ENCODE measurements at regions of chr12 and their contacts with region 1.

Region 1: GRCh38 chr12:114355389-114356088 is 50.4 kb downstream of the TBX5 start:
- DNase-seq: peak in 4 of 5 donors; percentile 33 to 69 (median 52)
- ATAC-seq: peak; percentile 58 to 88 (median 84)
- H3K4me3 ChIP-seq: no peak overlapping the region
- H3K27ac ChIP-seq: peak overlapping the region in 4 of 12 donors; percentile 11 to 38 (median 28)
- H3K4me1 ChIP-seq: peaks cover 0 to 13% (median 0%) of the 10 kb centered on the region in 12 donors
- H3K27me3 ChIP-seq: no peaks in the 10 kb centered on the region
- CTCF ChIP-seq: peak in 10 of 12 donors; percentile 28 to 63 (median 43)
- POLR2A ChIP-seq: no peak

Region 2: GRCh38 chr12:114245555-114245954 is 110.0 kb before region 1 on chr12:
- intact Hi-C with region 1: loop called in 1 of 10 experiments (anchors 10 kb)
- DNase-seq: no peak
- ATAC-seq: peak in 3 of 4 donors; percentile 41 to 59 (median 48)
- H3K4me3 ChIP-seq: no peak overlapping the region
- H3K27ac ChIP-seq: no peak overlapping the region
- H3K4me1 ChIP-seq: peaks cover 0 to 2% (median 0%) of the 10 kb centered on the region in 12 donors
- H3K27me3 ChIP-seq: peaks cover 0 to 15% (median 3%) of the 10 kb centered on the region in 9 donors
- CTCF ChIP-seq: peak in 8 of 12 donors; percentile 8 to 39 (median 26)
- POLR2A ChIP-seq: no peak

Region 3: DNA sequence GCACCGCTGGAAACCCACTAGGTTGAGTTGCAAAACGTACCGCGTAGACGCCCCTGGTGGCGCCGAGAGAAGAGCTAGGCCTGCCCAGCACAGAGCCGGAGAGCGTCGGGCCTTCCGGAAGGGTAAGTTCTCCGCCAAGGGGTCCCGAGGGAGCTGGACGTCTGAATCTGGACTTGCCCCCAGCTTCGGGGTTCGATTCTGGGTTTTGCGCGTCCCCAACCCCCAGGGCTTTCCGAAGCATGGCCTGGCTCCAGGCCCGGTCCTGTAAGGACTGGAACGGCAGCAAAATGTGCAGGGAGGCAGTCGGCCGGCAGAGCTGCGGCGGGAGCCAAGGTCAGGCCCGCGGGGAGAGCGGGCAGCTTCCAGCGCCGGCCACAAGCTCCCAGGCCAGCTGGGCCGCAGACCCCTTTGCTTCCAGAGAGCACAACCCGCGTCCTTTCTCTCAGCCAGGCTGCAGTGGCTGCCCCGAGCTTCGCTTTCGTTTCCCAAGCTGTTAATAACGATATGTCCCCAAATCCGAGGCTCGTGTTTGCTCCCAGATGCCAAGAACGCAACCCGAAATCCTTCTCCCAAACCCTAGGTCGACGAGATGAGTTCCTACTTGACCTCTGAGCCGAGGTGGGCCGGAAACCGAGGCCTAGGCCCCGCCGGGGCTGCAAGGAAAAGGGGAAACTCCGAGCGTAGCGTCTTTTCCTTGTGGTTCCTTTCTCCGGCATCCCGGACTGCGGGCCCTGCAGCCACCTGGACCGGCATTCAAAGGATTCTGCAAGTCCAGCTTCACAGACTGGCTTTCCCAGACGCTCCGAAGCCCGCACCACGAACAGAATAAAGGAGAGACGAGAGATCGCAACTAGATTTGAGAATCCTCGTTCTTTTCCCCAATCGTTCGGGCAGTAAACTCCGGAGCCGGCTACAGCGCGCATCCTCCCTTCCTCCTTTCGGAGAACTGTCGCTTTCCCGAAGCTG is 53.6 kb after region 1 on chr12:
- intact Hi-C with region 1: loop called in 4 of 10 experiments (anchors 5 to 10 kb)
- DNase-seq: peak; percentile 39 to 80 (median 65)
- ATAC-seq: peak; percentile 12 to 48 (median 39)
- H3K4me3 ChIP-seq: peak overlapping the region; percentile 15 to 88 (median 65)
- H3K27ac ChIP-seq: peak overlapping the region; percentile 57 to 96 (median 90)
- H3K4me1 ChIP-seq: peaks cover 0 to 29% (median 12%) of the 10 kb centered on the region in 12 donors
- H3K27me3 ChIP-seq: peaks cover 0 to 97% (median 0%) of the 10 kb centered on the region in 9 donors
- CTCF ChIP-seq: peak in 4 of 12 donors; percentile 6 to 15 (median 9)
- POLR2A ChIP-seq: no peak

Measured in heart left ventricle (tissue), 16 donors.